CD4-positive, alpha-beta memory T cell (primary cell): ENCODE measurements at regions of chr17 and their contacts with region 1.

Region 1: DNA sequence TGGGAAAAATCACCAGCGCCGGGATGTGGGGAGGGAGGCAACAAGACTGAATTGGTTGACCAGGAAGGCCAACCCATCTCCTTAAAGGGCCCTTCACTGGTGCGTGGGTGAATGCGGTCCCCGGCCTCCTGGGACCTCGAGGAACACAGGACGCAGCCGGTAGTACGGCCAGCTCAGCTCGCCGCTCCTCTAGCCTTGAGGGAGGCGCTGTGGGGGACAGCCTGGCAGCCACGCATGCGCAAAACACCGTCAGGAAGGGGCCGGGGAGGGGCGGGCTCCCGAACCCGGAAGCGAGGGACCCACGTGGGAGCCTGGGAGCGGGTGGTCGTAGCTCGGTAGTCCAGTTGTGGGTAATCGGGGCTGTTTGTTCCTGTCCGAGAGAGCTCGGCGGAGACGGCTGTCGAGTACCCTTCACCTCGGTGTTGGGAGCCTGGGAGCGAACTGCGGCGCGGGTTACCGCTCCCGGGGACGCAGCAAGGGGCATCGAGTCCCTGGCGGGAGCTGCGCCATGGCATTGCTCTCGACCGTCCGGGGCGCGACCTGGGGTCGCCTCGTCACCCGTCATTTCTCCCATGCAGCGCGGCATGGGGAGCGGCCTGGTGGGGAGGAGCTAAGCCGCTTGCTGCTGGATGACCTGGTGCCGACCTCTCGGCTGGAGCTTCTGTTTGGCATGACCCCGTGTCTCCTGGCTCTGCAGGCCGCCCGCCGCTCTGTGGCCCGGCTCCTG is at the start of gene MRM1:
- DNase-seq: peak; percentile 80 to 86 (median 82)
- H3K4me3 ChIP-seq: peak within 1 kb of the TSS; percentile 76 to 86
- H3K4me3 Mint-ChIP-seq: peak within 1 kb of the TSS; percentile 84 to 95 (median 93)
- H3K27ac ChIP-seq: peak within 1 kb of the TSS; percentile 74
- H3K27ac Mint-ChIP-seq: peak within 1 kb of the TSS; percentile 89 to 97 (median 94)
- H3K4me1 ChIP-seq: peaks cover 34% of the 10 kb centered on the region
- H3K4me1 Mint-ChIP-seq: peaks cover 27 to 45% (median 36%) of the 10 kb centered on the region in 4 donors
- H3K27me3 ChIP-seq: no peaks in the 10 kb centered on the region
- H3K27me3 Mint-ChIP-seq: no peaks in the 10 kb centered on the region
- total RNA-seq, gene MRM1: 11.8 to 13.3 TPM

Region 2: GRCh38 chr17:36486204-36487194 is 115.0 kb before region 1 on chr17 and contains the start of gene ZNHIT3:
- CTCF ChIA-PET with region 1: interaction called, 6 read pairs
- POLR2A ChIA-PET with region 1: interaction called, 12 read pairs
- intact Hi-C with region 1: loop called (anchors 2 kb)
- DNase-seq: peak; percentile 91 to 95 (median 91)
- H3K4me3 ChIP-seq: peak within 1 kb of the TSS; percentile 72 to 91
- H3K4me3 Mint-ChIP-seq: peak within 1 kb of the TSS; percentile 97 to 100 (median 99)
- H3K27ac ChIP-seq: peak within 1 kb of the TSS; percentile 70
- H3K27ac Mint-ChIP-seq: peak within 1 kb of the TSS; percentile 85 to 100 (median 99)
- H3K4me1 ChIP-seq: peaks cover 65% of the 10 kb centered on the region
- H3K4me1 Mint-ChIP-seq: peaks cover 28 to 82% (median 46%) of the 10 kb centered on the region in 4 donors
- H3K27me3 ChIP-seq: peaks cover 10% of the 10 kb centered on the region
- H3K27me3 Mint-ChIP-seq: peaks cover 9% of the 10 kb centered on the region in 2 donors
- total RNA-seq, gene ZNHIT3: 66.6 to 68.3 TPM

Region 3: GRCh38 chr17:36545465-36546417 is 55.7 kb before region 1 on chr17:
- CTCF ChIA-PET with region 1: interaction called, 5 read pairs
- POLR2A ChIA-PET with region 1: interaction called, 45 read pairs
- intact Hi-C with region 1: loop called (anchors 1 kb)
- DNase-seq: peak; percentile 97 to 99 (median 98)
- H3K4me3 ChIP-seq: peak overlapping the region; percentile 89 to 90
- H3K4me3 Mint-ChIP-seq: peak overlapping the region; percentile 88 to 97 (median 92)
- H3K27ac ChIP-seq: peak overlapping the region; percentile 82
- H3K27ac Mint-ChIP-seq: peak overlapping the region; percentile 92 to 98 (median 96)
- H3K4me1 ChIP-seq: peaks cover 59% of the 10 kb centered on the region
- H3K4me1 Mint-ChIP-seq: peaks cover 25 to 64% (median 40%) of the 10 kb centered on the region in 4 donors
- H3K27me3 ChIP-seq: no peaks in the 10 kb centered on the region
- H3K27me3 Mint-ChIP-seq: no peaks in the 10 kb centered on the region

Region 4: GRCh38 chr17:36614933-36615332 is 13.5 kb after region 1 on chr17:
- CTCF ChIA-PET with region 1: interaction called, 15 read pairs
- POLR2A ChIA-PET with region 1: interaction called, 4 read pairs
- intact Hi-C with region 1: no loop called
- DNase-seq: no peak
- H3K4me3 ChIP-seq: no peak overlapping the region
- H3K4me3 Mint-ChIP-seq: no peak overlapping the region
- H3K27ac ChIP-seq: no peak overlapping the region
- H3K27ac Mint-ChIP-seq: no peak overlapping the region
- H3K4me1 ChIP-seq: no peaks in the 10 kb centered on the region
- H3K4me1 Mint-ChIP-seq: no peaks in the 10 kb centered on the region
- H3K27me3 ChIP-seq: no peaks in the 10 kb centered on the region
- H3K27me3 Mint-ChIP-seq: peaks cover 0 to 1% of the 10 kb centered on the region in 2 donors

Region 5: DNA sequence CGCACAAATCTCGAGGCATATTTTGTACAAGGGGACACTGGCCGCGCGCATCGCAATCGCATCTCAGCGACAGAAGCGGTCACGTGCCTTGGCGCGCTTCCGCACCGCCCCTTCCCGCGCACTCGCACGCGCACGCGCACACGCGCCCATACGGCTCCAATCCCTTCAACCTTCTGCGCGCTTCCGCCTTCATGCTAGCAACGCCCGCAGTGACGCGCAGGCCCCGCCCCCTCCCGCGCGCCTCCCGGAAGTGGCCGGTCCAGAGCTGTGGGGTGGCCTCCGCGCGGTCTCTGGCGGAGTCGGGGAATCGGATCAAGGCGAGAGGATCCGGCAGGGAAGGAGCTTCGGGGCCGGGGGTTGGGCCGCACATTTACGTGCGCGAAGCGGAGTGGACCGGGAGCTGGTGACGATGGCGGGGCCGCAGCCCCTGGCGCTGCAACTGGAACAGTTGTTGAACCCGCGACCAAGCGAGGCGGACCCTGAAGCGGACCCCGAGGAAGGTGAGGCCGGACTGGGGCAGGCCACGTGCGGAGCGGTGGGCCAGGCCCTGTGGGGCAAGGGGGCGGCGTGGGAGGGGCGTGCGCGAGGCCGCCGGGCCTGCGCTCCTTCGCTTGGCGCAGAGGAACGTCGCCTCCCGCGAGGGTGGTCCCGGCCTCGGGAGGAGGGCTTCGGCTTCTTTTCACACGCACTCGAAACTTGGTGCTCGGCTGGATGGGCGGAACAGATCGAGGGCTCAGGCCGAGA is 347.4 kb after region 1 on chr17 and contains the start of gene AATF:
- CTCF ChIA-PET with region 1: no interaction called
- POLR2A ChIA-PET with region 1: no interaction called
- intact Hi-C with region 1: loop called (anchors 10 kb)
- DNase-seq: peak; percentile 94 to 97 (median 96)
- H3K4me3 ChIP-seq: peak within 1 kb of the TSS; percentile 68 to 89
- H3K4me3 Mint-ChIP-seq: peak within 1 kb of the TSS; percentile 87 to 98 (median 97)
- H3K27ac ChIP-seq: peak within 1 kb of the TSS; percentile 86
- H3K27ac Mint-ChIP-seq: peak within 1 kb of the TSS; percentile 85 to 98 (median 96)
- H3K4me1 ChIP-seq: peaks cover 47% of the 10 kb centered on the region
- H3K4me1 Mint-ChIP-seq: peaks cover 31 to 63% (median 46%) of the 10 kb centered on the region in 4 donors
- H3K27me3 ChIP-seq: peaks cover 35% of the 10 kb centered on the region
- H3K27me3 Mint-ChIP-seq: peaks cover 24 to 27% of the 10 kb centered on the region in 2 donors
- total RNA-seq, gene AATF: 60.5 to 61.2 TPM

Region 6: GRCh38 chr17:37239690-37240334 is 638.3 kb after region 1 on chr17:
- CTCF ChIA-PET with region 1: interaction called, 21 read pairs
- POLR2A ChIA-PET with region 1: no interaction called
- intact Hi-C with region 1: no loop called
- DNase-seq: peak in 3 of 5 donors; percentile 3 to 10 (median 6)
- H3K4me3 ChIP-seq: no peak overlapping the region
- H3K4me3 Mint-ChIP-seq: no peak overlapping the region
- H3K27ac ChIP-seq: no peak overlapping the region
- H3K27ac Mint-ChIP-seq: peak overlapping the region in 1 of 7 donors; percentile 55
- H3K4me1 ChIP-seq: no peaks in the 10 kb centered on the region
- H3K4me1 Mint-ChIP-seq: no peaks in the 10 kb centered on the region
- H3K27me3 ChIP-seq: no peaks in the 10 kb centered on the region
- H3K27me3 Mint-ChIP-seq: no peaks in the 10 kb centered on the region